Adrenal gland (tissue), 19 donors: ENCODE measurements at regions of chr2 and their contacts with region 1.

Region 1: DNA sequence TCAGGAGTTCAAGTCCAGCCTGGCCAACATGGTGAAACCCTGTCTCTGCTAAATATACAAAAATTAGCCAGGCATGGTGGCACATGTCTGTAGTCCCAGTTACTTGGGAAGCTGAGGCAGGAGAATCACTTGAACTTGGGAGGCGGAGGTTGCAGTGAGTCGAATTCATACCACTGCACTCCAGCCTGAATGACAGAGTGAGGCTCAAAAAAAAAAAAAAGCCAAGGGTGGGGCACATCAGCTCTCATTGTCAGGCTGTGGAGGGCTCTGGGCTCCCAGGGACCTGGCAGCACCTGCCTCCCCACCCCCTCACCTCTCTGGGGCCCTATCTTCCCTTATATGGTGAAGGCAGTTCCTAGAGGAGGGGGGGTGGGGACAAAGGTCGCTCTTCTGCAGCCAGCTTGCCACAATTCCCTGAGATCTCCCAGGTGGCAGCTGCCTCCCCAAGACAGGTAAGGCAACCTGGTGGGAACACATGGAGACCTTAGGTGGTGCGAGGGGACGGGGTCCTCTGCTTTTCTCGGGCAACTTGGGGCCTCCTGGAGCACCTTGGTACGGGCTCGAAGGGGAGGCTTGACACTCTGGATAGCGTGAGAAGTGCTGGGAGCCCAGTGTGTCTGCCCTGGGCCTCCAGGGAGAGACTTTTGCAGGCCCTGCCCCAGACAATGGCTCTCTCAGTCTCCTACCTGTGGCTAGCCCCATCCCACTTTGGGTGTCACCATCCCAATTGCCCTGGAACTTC is at the start of gene VIL1:
- DNase-seq: no peak
- H3K4me3 ChIP-seq: no peak within 1 kb of the TSS
- H3K27ac ChIP-seq: no peak within 1 kb of the TSS
- H3K4me1 ChIP-seq: no peaks in the 10 kb centered on the region
- H3K27me3 ChIP-seq: no peaks in the 10 kb centered on the region
- CTCF ChIP-seq: no peak
- POLR2A ChIP-seq: no peak
- total RNA-seq, gene VIL1: 0.47 to 4.5 (median 0.53) TPM in 3 of 9 donors, not detected in the others

Region 2: DNA sequence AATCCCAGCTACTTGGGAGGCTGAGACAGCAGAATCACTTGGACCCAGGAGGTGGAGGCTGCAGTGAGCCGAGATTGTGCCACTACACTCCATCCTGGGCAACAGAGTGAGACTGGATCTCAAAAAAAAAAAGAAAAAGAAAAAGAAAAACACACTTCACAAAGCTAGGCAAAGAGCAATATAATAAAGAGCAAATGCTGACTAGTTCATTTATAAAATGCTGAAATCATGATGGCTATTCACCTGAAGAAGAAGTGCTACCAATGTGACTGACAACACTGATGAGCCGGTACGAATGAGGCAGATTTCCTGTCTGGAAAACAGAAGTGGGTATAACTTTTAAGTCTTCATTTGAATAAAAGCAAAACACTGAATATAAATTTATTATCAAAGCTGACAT is 38.0 kb after region 1 on chr2:
- intact Hi-C with region 1: loop called in 1 of 2 experiments (anchors 5 kb)
- DNase-seq: no peak
- H3K4me3 ChIP-seq: no peak overlapping the region
- H3K27ac ChIP-seq: no peak overlapping the region
- H3K4me1 ChIP-seq: no peaks in the 10 kb centered on the region
- H3K27me3 ChIP-seq: no peaks in the 10 kb centered on the region
- CTCF ChIP-seq: no peak
- POLR2A ChIP-seq: no peak